Colonic mucosa (tissue), 4 donors: ENCODE measurements at regions of chr1 and their contacts with region 1.

Region 1: GRCh38 chr1:99481391-99481996 is 164.4 kb upstream of the PALMD start:
- DNase-seq: peak; percentile 47
- H3K4me3 ChIP-seq: no peak overlapping the region
- H3K27ac ChIP-seq: no peak overlapping the region
- H3K4me1 ChIP-seq: no peaks in the 10 kb centered on the region
- H3K27me3 ChIP-seq: no peaks in the 10 kb centered on the region
- CTCF ChIP-seq: peak; percentile 60

Region 2: GRCh38 chr1:99180343-99180808 is 301.1 kb before region 1 on chr1:
- intact Hi-C with region 1: loop called (anchors 2 kb)
- DNase-seq: peak; percentile 80
- H3K4me3 ChIP-seq: no peak overlapping the region
- H3K27ac ChIP-seq: no peak overlapping the region
- H3K4me1 ChIP-seq: no peaks in the 10 kb centered on the region
- H3K27me3 ChIP-seq: no peaks in the 10 kb centered on the region
- CTCF ChIP-seq: peak; percentile 60

Region 3: DNA sequence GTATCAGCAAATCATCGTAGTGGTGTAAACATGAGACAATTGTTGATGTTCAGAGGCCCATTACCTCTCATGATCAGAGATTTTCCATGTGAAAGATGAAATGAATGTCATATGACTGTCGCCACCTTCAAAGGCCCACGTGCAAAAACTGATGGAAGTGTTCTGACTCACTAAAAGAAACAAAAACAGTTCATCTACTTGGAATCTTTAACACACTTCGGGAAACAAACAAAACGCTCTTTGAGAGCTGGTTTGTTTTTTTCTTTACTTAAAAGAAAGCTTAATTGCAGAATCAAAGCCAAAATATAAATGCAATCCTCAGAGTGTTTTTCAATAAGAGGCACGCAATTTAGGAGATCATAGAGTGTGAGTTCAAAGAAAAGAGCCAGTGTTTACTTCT is 116.4 kb before region 1 on chr1:
- intact Hi-C with region 1: no loop called
- DNase-seq: no peak
- H3K4me3 ChIP-seq: no peak overlapping the region
- H3K27ac ChIP-seq: no peak overlapping the region
- H3K4me1 ChIP-seq: no peaks in the 10 kb centered on the region
- H3K27me3 ChIP-seq: no peaks in the 10 kb centered on the region
- CTCF ChIP-seq: no peak

Region 4: GRCh38 chr1:99685516-99686180 is 204.2 kb after region 1 on chr1:
- intact Hi-C with region 1: loop called (anchors 10 kb)
- DNase-seq: peak; percentile 74
- H3K4me3 ChIP-seq: no peak overlapping the region
- H3K27ac ChIP-seq: no peak overlapping the region
- H3K4me1 ChIP-seq: no peaks in the 10 kb centered on the region
- H3K27me3 ChIP-seq: no peaks in the 10 kb centered on the region
- CTCF ChIP-seq: peak; percentile 45